ENCODE measurements at regions of chr10 and their contacts with region 1.

Region 1: DNA sequence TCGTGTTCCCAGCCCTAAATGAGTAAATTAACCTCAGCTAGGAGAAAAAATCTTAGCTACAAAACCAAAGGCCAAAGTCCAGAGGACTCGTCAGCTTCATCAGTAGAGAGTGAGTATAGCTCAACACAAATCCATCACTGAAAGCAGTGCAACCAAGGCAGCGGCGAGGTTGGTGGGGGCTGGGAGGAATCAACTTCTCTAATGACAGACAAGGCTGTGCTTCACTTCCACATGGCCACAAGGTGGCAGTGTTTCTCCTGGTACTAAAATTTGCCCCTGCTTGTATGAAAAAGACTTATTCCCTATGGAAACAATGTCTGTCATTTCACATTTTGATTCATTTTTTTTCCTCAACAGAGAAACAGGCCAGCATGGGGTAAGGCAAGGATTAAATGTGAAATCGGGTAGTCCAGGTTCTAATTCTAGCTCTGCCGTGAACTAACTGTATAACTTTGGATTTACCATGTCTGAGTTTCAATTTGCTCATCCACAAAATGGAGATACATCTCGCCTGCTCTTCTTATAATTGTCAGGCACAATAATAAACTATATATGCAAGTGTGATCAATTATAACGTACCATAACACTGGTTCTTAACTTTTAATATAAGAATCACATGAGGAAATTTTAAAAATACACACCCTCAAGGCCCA is 39.3 kb downstream of the FAS start:
- DNase-seq: peak; percentile 34 to 81 (median 68)
- ATAC-seq: peak; percentile 87
- H3K4me3 ChIP-seq: no peak overlapping the region
- H3K4me3 Mint-ChIP-seq: no peak overlapping the region
- H3K27ac ChIP-seq: no peak overlapping the region
- H3K27ac Mint-ChIP-seq: no peak overlapping the region
- H3K4me1 ChIP-seq: no peaks in the 10 kb centered on the region
- H3K4me1 Mint-ChIP-seq: peaks cover 4% of the 10 kb centered on the region
- H3K27me3 ChIP-seq: no peaks in the 10 kb centered on the region
- H3K27me3 Mint-ChIP-seq: no peaks in the 10 kb centered on the region
- CTCF ChIP-seq: peak; percentile 91

Region 2: DNA sequence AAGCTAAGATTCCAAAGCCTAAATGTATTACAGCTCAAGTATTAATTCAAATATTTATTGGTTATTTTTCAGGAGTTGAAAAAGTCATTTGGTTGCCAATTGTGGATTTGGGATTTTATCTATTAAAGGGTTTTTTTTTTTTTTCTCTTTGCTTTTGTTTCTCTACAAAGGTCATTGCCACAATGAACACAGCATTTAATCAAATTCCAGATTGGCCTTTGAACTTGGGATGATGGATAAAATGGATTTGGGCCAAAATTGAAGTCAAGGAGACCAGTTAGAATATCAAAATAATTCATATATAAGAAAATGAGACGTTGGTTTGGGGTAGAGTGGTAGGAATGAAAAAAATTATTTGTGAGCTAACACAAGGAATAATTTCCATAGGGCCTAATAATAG is 260.5 kb before region 1 on chr10:
- CTCF ChIA-PET with region 1: no interaction called
- POLR2A ChIA-PET with region 1: no interaction called
- intact Hi-C with region 1: no loop called
- DNase-seq: no peak
- ATAC-seq: no peak
- H3K4me3 ChIP-seq: no peak overlapping the region
- H3K4me3 Mint-ChIP-seq: no peak overlapping the region
- H3K27ac ChIP-seq: no peak overlapping the region
- H3K27ac Mint-ChIP-seq: no peak overlapping the region
- H3K4me1 ChIP-seq: no peaks in the 10 kb centered on the region
- H3K4me1 Mint-ChIP-seq: no peaks in the 10 kb centered on the region
- H3K27me3 ChIP-seq: no peaks in the 10 kb centered on the region
- H3K27me3 Mint-ChIP-seq: no peaks in the 10 kb centered on the region
- CTCF ChIP-seq: no peak

Region 3: GRCh38 chr10:89007129-89007893 is 22.6 kb before region 1 on chr10:
- CTCF ChIA-PET with region 1: interaction called, 24 read pairs
- POLR2A ChIA-PET with region 1: no interaction called
- intact Hi-C with region 1: no loop called
- DNase-seq: no peak
- ATAC-seq: no peak
- H3K4me3 ChIP-seq: no peak overlapping the region
- H3K4me3 Mint-ChIP-seq: no peak overlapping the region
- H3K27ac ChIP-seq: no peak overlapping the region
- H3K27ac Mint-ChIP-seq: no peak overlapping the region
- H3K4me1 ChIP-seq: peaks cover 6% of the 10 kb centered on the region
- H3K4me1 Mint-ChIP-seq: peaks cover 11% of the 10 kb centered on the region
- H3K27me3 ChIP-seq: no peaks in the 10 kb centered on the region
- H3K27me3 Mint-ChIP-seq: no peaks in the 10 kb centered on the region
- CTCF ChIP-seq: no peak

Region 4: DNA sequence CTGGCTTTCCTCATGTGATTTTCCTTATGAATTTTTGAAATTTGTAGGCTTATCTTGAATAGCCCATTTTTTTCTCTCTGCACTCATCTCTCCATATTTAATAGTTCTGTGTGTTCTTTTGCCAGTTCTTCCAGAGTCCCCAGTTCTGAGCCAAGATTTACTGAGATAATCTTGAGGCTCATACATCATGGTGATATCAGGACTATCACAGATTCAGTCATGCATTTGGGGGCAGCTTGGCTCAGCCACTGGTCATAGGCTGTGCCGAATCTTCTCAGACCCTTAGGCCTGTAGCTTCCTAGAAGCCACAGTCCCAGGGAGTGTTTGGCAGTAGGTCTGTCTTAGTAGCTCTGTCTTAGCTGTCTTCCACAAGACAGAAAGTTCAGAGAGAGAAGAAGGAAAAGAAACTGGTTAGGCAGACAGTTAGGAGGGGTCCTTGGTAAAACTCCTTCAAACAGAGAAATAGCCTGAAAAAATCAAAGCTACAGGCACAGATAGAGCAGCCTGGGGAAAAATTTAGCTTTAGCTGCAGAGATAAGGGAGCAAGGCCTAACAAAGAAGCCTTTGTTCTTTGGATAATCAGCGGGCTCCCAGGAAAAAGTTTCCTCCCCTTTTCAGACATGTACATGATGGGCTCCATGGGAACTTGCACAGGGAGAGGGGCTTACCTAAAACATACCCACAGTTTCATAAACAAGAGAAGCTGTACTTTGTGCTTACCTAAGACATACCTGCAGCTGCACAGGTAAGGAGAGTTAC is 10.2 kb before region 1 on chr10:
- CTCF ChIA-PET with region 1: interaction called, 34 read pairs
- POLR2A ChIA-PET with region 1: no interaction called
- intact Hi-C with region 1: no loop called
- DNase-seq: no peak
- ATAC-seq: no peak
- H3K4me3 ChIP-seq: no peak overlapping the region
- H3K4me3 Mint-ChIP-seq: no peak overlapping the region
- H3K27ac ChIP-seq: no peak overlapping the region
- H3K27ac Mint-ChIP-seq: no peak overlapping the region
- H3K4me1 ChIP-seq: no peaks in the 10 kb centered on the region
- H3K4me1 Mint-ChIP-seq: peaks cover 8% of the 10 kb centered on the region
- H3K27me3 ChIP-seq: no peaks in the 10 kb centered on the region
- H3K27me3 Mint-ChIP-seq: no peaks in the 10 kb centered on the region
- CTCF ChIP-seq: no peak

Region 5: GRCh38 chr10:89042562-89042961 is 12.7 kb after region 1 on chr10:
- CTCF ChIA-PET with region 1: interaction called, 20 read pairs
- POLR2A ChIA-PET with region 1: interaction called, 3 read pairs
- intact Hi-C with region 1: no loop called
- DNase-seq: no peak
- ATAC-seq: no peak
- H3K4me3 ChIP-seq: no peak overlapping the region
- H3K4me3 Mint-ChIP-seq: no peak overlapping the region
- H3K27ac ChIP-seq: no peak overlapping the region
- H3K27ac Mint-ChIP-seq: no peak overlapping the region
- H3K4me1 ChIP-seq: no peaks in the 10 kb centered on the region
- H3K4me1 Mint-ChIP-seq: no peaks in the 10 kb centered on the region
- H3K27me3 ChIP-seq: no peaks in the 10 kb centered on the region
- H3K27me3 Mint-ChIP-seq: no peaks in the 10 kb centered on the region
- CTCF ChIP-seq: no peak

Region 6: GRCh38 chr10:89207181-89207800 is 177.4 kb after region 1 on chr10 and contains the start of gene CH25H:
- CTCF ChIA-PET with region 1: interaction called, 41 read pairs
- POLR2A ChIA-PET with region 1: no interaction called
- intact Hi-C with region 1: no loop called
- DNase-seq: peak in 6 of 9 experiments; percentile 30 to 61 (median 50)
- ATAC-seq: peak; percentile 39
- H3K4me3 ChIP-seq: peak within 1 kb of the TSS; percentile 51 to 67
- H3K4me3 Mint-ChIP-seq: peak within 1 kb of the TSS; percentile 81
- H3K27ac ChIP-seq: no peak within 1 kb of the TSS
- H3K27ac Mint-ChIP-seq: peak within 1 kb of the TSS; percentile 62
- H3K4me1 ChIP-seq: peaks cover 19% of the 10 kb centered on the region
- H3K4me1 Mint-ChIP-seq: peaks cover 16% of the 10 kb centered on the region
- H3K27me3 ChIP-seq: peaks cover 12 to 28% of the 10 kb centered on the region in 2 experiments
- H3K27me3 Mint-ChIP-seq: peaks cover 47% of the 10 kb centered on the region
- CTCF ChIP-seq: no peak
- total RNA-seq, gene CH25H: 0.44 to 0.54 TPM

Region 7: GRCh38 chr10:89563861-89564478 is 534.1 kb after region 1 on chr10:
- CTCF ChIA-PET with region 1: no interaction called
- POLR2A ChIA-PET with region 1: no interaction called
- intact Hi-C with region 1: loop called (anchors 5 to 10 kb)
- DNase-seq: peak in 3 of 9 experiments; percentile 13 to 71 (median 60)
- ATAC-seq: peak; percentile 59
- H3K4me3 ChIP-seq: no peak overlapping the region
- H3K4me3 Mint-ChIP-seq: no peak overlapping the region
- H3K27ac ChIP-seq: no peak overlapping the region
- H3K27ac Mint-ChIP-seq: no peak overlapping the region
- H3K4me1 ChIP-seq: no peaks in the 10 kb centered on the region
- H3K4me1 Mint-ChIP-seq: no peaks in the 10 kb centered on the region
- H3K27me3 ChIP-seq: no peaks in the 10 kb centered on the region
- H3K27me3 Mint-ChIP-seq: peaks cover 6% of the 10 kb centered on the region
- CTCF ChIP-seq: peak; percentile 81